ENCODE measurements at regions of chr17 and their contacts with region 1.

Region 1: GRCh38 chr17:42248351-42249179 is 27.6 kb downstream of the STAT5B start:
- DNase-seq: peak; percentile 68 to 89 (median 85)
- H3K4me3 ChIP-seq: peak overlapping the region; percentile 59
- H3K4me3 Mint-ChIP-seq: peak overlapping the region; percentile 79 to 89 (median 85)
- H3K27ac ChIP-seq: peak overlapping the region; percentile 76
- H3K27ac Mint-ChIP-seq: peak overlapping the region; percentile 95 to 100 (median 98)
- H3K4me1 ChIP-seq: peaks cover 66% of the 10 kb centered on the region
- H3K4me1 Mint-ChIP-seq: peaks cover 70 to 84% (median 82%) of the 10 kb centered on the region in 3 donors
- H3K27me3 ChIP-seq: no peaks in the 10 kb centered on the region
- H3K27me3 Mint-ChIP-seq: no peaks in the 10 kb centered on the region

Region 2: DNA sequence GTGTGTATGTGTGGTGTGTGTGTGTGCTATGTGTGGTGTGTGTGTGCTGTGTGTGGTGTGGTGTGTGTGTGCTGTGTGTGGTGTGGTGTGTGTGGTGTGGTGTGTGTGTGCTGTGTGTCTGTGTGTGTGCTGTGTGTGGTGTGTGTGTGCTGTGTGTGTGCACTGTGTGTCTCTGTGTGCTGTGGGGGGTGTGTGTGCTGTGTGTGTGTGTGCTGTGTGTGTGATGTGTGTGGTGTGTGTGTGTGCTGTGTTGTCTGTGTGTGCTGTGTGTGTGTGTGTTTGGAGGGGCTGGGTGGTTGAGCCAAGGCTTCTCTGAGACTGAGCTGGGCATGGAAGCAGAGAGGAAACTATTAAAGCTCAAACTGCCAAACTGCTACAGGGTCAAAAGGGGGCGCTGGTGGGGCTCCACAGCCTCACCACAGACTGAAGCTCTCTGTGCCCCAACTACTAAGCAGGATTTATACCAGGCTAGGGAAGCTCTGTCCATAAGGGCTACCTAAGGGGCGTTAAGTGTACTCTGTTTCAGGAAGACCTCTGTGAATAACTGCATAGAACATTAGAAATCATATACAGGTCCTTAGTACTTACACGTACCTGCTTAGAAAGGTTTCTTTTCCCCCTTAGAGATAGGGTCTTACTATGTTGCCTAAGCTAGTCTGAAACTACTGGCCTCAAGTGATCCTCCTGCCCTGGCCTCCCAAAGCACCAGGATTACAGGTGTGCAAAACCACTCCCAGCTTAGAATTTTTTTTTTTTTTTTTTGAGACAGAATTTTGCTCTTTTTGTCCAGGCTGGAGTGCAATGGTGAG is 26.4 kb before region 1 on chr17:
- CTCF ChIA-PET with region 1: interaction called, 34 read pairs
- POLR2A ChIA-PET with region 1: interaction called, 4 read pairs
- DNase-seq: peak; percentile 15 to 68 (median 55)
- H3K4me3 ChIP-seq: no peak overlapping the region
- H3K4me3 Mint-ChIP-seq: no peak overlapping the region
- H3K27ac ChIP-seq: no peak overlapping the region
- H3K27ac Mint-ChIP-seq: peak overlapping the region in 7 of 8 donors; percentile 28 to 98 (median 77)
- H3K4me1 ChIP-seq: no peaks in the 10 kb centered on the region
- H3K4me1 Mint-ChIP-seq: peaks cover 0 to 8% (median 7%) of the 10 kb centered on the region in 3 donors
- H3K27me3 ChIP-seq: no peaks in the 10 kb centered on the region
- H3K27me3 Mint-ChIP-seq: peaks cover 0 to 2% of the 10 kb centered on the region in 2 donors

Region 3: GRCh38 chr17:42266918-42267778 is 18.6 kb after region 1 on chr17:
- CTCF ChIA-PET with region 1: interaction called, 4 read pairs
- POLR2A ChIA-PET with region 1: interaction called, 47 read pairs
- DNase-seq: peak; percentile 38 to 87 (median 60)
- H3K4me3 ChIP-seq: no peak overlapping the region
- H3K4me3 Mint-ChIP-seq: peak overlapping the region in 4 of 7 donors; percentile 19 to 58 (median 40)
- H3K27ac ChIP-seq: peak overlapping the region; percentile 49
- H3K27ac Mint-ChIP-seq: peak overlapping the region; percentile 84 to 98 (median 94)
- H3K4me1 ChIP-seq: peaks cover 50% of the 10 kb centered on the region
- H3K4me1 Mint-ChIP-seq: peaks cover 56 to 74% (median 66%) of the 10 kb centered on the region in 3 donors
- H3K27me3 ChIP-seq: no peaks in the 10 kb centered on the region
- H3K27me3 Mint-ChIP-seq: no peaks in the 10 kb centered on the region

Region 4: DNA sequence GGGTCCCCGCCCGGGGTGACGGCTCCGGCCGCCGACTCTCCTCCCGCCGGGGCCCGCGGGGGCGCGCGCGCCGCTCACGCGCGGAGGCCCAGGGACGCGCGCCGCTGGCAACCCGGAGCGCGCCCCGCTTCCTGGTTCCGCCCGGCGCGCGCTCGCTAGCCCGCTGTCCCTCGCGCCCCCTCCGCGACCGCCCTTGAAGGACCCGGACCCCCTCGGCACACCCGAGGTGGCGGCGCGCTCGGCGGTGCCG is 27.7 kb after region 1 on chr17 and contains the start of gene STAT5B:
- CTCF ChIA-PET with region 1: interaction called, 9 read pairs
- POLR2A ChIA-PET with region 1: interaction called, 47 read pairs
- DNase-seq: peak; percentile 56 to 81 (median 73)
- H3K4me3 ChIP-seq: peak within 1 kb of the TSS; percentile 75
- H3K4me3 Mint-ChIP-seq: peak within 1 kb of the TSS; percentile 93 to 99 (median 98)
- H3K27ac ChIP-seq: peak within 1 kb of the TSS; percentile 85
- H3K27ac Mint-ChIP-seq: peak within 1 kb of the TSS; percentile 94 to 99 (median 97)
- H3K4me1 ChIP-seq: peaks cover 47% of the 10 kb centered on the region
- H3K4me1 Mint-ChIP-seq: peaks cover 45 to 53% (median 49%) of the 10 kb centered on the region in 3 donors
- H3K27me3 ChIP-seq: no peaks in the 10 kb centered on the region
- H3K27me3 Mint-ChIP-seq: no peaks in the 10 kb centered on the region
- total RNA-seq, gene STAT5B: 124 to 132 TPM

Region 5: DNA sequence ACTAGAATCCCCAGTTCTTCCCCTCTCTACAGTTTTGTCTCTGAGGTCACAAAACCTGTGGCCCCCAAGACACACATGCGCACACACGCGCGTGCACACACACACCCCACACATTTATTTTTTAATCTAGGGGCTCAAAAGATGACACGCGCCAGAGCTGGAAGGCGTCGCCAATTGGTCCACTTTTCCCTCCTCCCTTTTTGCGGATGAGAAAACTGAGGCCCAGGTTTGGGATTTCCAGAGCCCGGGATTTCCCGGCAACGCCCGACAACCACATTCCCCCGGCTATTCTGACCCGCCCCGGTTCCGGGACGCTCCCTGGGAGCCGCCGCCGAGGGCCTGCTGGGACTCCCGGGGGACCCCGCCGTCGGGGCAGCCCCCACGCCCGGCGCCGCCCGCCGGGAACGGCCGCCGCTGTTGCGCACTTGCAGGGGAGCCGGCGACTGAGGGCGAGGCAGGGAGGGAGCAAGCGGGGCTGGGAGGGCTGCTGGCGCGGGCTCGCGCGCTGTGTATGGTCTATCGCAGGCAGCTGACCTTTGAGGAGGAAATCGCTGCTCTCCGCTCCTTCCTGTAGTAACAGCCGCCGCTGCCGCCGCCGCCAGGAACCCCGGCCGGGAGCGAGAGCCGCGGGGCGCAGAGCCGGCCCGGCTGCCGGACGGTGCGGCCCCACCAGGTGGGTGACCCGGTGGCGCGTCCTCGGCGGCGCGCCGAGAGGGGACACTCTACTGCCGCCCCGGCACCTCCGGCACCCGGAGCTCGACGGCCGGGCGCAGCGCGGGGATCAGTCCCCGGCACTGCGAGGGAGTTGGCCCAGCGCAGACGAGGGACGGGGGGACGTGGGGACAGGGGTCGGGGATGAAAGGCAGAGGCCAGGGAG is 39.6 kb after region 1 on chr17 and contains the start of gene STAT5A:
- CTCF ChIA-PET with region 1: interaction called, 19 read pairs
- POLR2A ChIA-PET with region 1: interaction called, 55 read pairs
- DNase-seq: peak; percentile 72 to 91 (median 83)
- H3K4me3 ChIP-seq: peak within 1 kb of the TSS; percentile 65
- H3K4me3 Mint-ChIP-seq: peak within 1 kb of the TSS; percentile 93 to 97 (median 96)
- H3K27ac ChIP-seq: peak within 1 kb of the TSS; percentile 88
- H3K27ac Mint-ChIP-seq: peak within 1 kb of the TSS; percentile 95 to 99 (median 99)
- H3K4me1 ChIP-seq: peaks cover 30% of the 10 kb centered on the region
- H3K4me1 Mint-ChIP-seq: peaks cover 42 to 67% (median 52%) of the 10 kb centered on the region in 3 donors
- H3K27me3 ChIP-seq: no peaks in the 10 kb centered on the region
- H3K27me3 Mint-ChIP-seq: no peaks in the 10 kb centered on the region
- total RNA-seq, gene STAT5A: 259 to 263 TPM

Region 6: DNA sequence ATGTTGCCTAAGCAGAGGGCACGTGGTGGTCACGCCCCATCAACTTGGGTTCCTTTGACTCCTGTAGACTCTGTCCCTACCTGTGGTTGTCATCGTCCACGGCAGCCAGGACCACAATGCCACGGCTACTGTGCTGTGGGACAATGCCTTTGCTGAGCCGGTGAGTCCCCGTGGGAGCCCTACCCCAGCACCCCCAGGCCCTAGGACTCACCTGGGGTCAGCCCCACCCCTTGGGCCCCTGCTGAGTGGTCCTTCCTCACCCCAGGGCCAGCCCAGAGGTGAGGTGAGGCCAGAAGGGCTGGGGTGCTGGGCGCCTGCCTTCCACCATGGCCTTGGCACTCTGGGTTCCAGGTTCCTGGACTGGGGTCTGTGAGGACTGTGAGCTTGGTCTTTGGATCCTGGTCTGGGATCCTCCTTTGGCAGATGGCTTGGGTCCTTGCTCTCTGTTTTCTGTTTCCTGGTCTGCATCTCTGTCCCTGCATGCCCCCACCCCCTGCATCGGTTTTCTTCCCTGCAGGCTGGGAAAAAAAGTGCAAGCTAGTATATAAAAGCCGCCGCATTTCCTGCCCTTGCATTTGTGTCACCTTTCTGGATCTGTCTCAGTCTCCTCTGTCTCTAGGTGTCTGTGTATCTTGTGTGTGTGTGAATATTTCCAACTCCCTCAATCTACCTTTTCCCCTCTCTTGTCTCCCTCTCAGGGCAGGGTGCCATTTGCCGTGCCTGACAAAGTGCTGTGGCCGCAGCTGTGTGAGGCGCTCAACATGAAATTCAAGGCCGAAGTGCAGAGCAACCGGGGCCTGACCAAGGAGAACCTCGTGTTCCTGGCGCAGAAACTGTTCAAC is 57.2 kb after region 1 on chr17:
- CTCF ChIA-PET with region 1: no interaction called
- POLR2A ChIA-PET with region 1: no interaction called
- DNase-seq: peak in 1 of 5 donors; percentile 28
- H3K4me3 ChIP-seq: no peak overlapping the region
- H3K4me3 Mint-ChIP-seq: no peak overlapping the region
- H3K27ac ChIP-seq: no peak overlapping the region
- H3K27ac Mint-ChIP-seq: peak overlapping the region in 4 of 8 donors; percentile 31 to 78 (median 55)
- H3K4me1 ChIP-seq: peaks cover 5% of the 10 kb centered on the region
- H3K4me1 Mint-ChIP-seq: peaks cover 1 to 8% (median 2%) of the 10 kb centered on the region in 3 donors
- H3K27me3 ChIP-seq: no peaks in the 10 kb centered on the region
- H3K27me3 Mint-ChIP-seq: no peaks in the 10 kb centered on the region

Region 7: GRCh38 chr17:42388381-42389134 is 140.0 kb after region 1 on chr17 and contains the start of gene STAT3:
- CTCF ChIA-PET with region 1: interaction called, 3 read pairs
- POLR2A ChIA-PET with region 1: interaction called, 11 read pairs
- DNase-seq: peak; percentile 100
- H3K4me3 ChIP-seq: peak within 1 kb of the TSS; percentile 94
- H3K4me3 Mint-ChIP-seq: peak within 1 kb of the TSS; percentile 88 to 99 (median 94)
- H3K27ac ChIP-seq: peak within 1 kb of the TSS; percentile 100
- H3K27ac Mint-ChIP-seq: peak within 1 kb of the TSS; percentile 99 to 100 (median 100)
- H3K4me1 ChIP-seq: peaks cover 33% of the 10 kb centered on the region
- H3K4me1 Mint-ChIP-seq: peaks cover 31 to 59% (median 40%) of the 10 kb centered on the region in 3 donors
- H3K27me3 ChIP-seq: no peaks in the 10 kb centered on the region
- H3K27me3 Mint-ChIP-seq: no peaks in the 10 kb centered on the region
- total RNA-seq, gene STAT3: 148 to 155 TPM

Measured in CD8-positive, alpha-beta memory T cell (primary cell).